ENCODE measurements at regions of chr16 and their contacts with region 1.

Region 1: DNA sequence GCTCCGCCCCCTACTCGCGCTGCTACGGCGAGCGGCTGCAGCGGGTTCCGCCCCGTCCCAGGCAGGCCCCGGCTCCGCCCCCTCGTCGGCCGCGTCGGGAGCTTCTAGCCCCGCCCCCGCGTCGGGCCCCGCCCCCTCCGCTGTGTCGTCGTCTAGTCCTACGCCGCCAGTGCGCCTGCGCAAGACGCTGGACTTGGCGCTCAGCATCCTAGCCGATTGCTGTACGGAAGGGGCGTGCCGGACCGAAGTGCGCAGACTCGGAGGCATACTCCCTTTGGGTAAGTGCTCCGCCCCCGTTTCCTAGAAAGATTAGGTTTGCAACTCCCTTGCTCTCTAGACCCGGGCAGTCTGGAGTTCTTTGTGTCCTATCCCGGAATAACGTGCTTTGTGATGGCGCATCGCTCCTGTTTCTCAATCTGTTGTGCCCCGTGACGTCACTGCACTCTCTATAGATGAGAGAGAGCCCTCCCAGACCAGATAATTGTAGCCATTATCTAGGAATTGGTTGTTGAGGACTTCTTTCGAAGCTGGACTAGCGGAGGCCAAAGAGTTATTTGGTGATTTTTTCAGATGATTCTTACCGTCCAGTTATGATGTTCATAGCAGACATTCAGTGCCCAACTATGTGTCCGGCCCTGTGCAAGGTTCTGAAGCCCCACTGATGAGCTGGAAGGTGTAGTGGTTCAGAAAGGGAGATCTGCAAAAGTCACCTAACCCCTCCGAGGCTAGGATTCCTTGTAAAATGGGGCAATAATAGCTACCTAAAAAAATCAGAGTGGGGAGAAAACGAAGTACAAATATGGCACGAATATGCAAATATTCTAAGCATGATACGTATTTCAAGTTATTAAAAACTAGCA is 651 bp downstream of the ARMC5 start:
- DNase-seq: peak; percentile 93

Region 2: GRCh38 chr16:31700526-31701388 is 240.8 kb after region 1 on chr16:
- in situ Hi-C with region 1: loop called (anchors 10 kb)
- DNase-seq: peak; percentile 72

Region 3: DNA sequence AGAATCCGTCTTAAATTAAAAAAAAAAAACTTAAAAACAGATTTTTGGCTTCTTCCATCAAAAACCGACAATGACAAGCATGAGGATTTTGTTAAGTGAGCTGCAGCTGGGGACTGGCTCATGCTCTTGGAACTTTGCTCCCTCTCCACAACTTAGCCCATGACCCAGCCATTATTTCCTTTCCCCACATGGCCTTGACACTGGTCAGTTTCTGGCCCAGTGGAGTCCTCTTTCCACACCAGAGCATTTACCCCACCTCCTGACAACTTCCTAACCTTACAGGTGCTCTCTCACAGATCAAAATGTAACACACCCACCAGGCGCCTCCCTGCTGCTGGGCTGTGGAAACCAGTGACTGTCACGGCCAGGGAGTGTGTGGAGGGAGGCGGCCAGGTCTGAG is 350.9 kb after region 1 on chr16:
- in situ Hi-C with region 1: no loop called
- DNase-seq: no peak

Measured in KBM-7 (cell line).